ENCODE measurements at regions of chr6 and their contacts with region 1.

Region 1: DNA sequence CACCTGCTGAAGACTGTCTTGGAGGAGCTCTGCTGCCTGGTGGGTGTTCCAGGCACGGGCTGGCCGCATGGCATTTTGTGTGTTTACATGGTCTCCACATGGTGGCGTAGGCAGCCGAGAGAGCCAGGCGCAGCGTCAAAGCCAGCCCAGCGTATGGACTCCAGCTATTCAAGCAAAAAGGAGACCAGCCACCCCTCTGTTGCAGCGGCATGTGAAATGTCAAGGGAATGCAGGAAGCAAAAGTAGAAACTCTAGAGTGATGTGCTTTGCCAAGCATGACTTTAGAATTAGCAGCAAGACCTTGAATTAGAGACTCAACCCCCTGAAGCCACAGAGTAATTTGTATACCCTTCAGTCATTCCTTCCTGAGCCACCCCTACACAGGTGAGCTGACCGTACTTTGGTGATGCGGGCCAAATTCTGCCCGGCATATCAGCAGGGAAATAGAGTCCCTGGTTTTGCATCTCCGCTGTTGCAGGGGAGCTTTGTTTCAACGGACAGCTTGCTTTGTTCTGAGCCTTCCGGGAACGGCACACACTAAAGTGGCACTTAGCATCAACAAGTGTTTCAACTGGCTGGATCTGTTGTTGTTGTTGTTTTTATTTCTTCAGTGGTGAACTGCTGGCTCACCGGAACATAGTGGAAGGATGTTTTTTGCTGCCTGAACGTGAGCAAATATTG is 48.5 kb downstream of the FNDC1 start:
- DNase-seq: peak; percentile 39
- ATAC-seq: peak; percentile 98
- H3K4me3 ChIP-seq: no peak overlapping the region
- H3K27ac ChIP-seq: no peak overlapping the region
- H3K4me1 ChIP-seq: 0 out of 4 replicates have a peak, but pooled peaks cover 0 to 4% of the 10 kb centered on the region in 2 experiments
- H3K27me3 ChIP-seq: peaks cover 33% of the 10 kb centered on the region
- CTCF ChIP-seq: peak; percentile 63 to 75 (median 72)
- POLR2A ChIP-seq: no peak
- RAD21 ChIP-seq: peak; percentile 77

Region 2: GRCh38 chr6:159252955-159253508 is 35.3 kb after region 1 on chr6:
- CTCF ChIA-PET with region 1: interaction called, 14 read pairs
- POLR2A ChIA-PET with region 1: no interaction called
- RAD21 ChIA-PET with region 1: no interaction called
- intact Hi-C with region 1: no loop called
- DNase-seq: peak; percentile 33
- ATAC-seq: peak; percentile 94
- H3K4me3 ChIP-seq: no peak overlapping the region
- H3K27ac ChIP-seq: no peak overlapping the region
- H3K4me1 ChIP-seq: 0 out of 4 replicates have a peak, but pooled peaks cover 0 to 3% of the 10 kb centered on the region in 2 experiments
- H3K27me3 ChIP-seq: 0 out of 2 replicates have a peak, but pooled peaks cover 6% of the 10 kb centered on the region
- CTCF ChIP-seq: peak; percentile 36 to 69 (median 66); a peak in 5 of 6 replicates
- POLR2A ChIP-seq: no peak
- RAD21 ChIP-seq: peak; percentile 37; the same call in 1 of the 2 replicates

Region 3: GRCh38 chr6:159463119-159463829 is 245.5 kb after region 1 on chr6:
- CTCF ChIA-PET with region 1: interaction called, 12 read pairs
- POLR2A ChIA-PET with region 1: no interaction called
- RAD21 ChIA-PET with region 1: no interaction called
- intact Hi-C with region 1: loop called (anchors 2 kb)
- DNase-seq: peak; percentile 16
- ATAC-seq: peak; percentile 72
- H3K4me3 ChIP-seq: no peak overlapping the region
- H3K27ac ChIP-seq: no peak overlapping the region
- H3K4me1 ChIP-seq: no peaks in the 10 kb centered on the region
- H3K27me3 ChIP-seq: 0 out of 2 replicates have a peak, but pooled peaks cover 3% of the 10 kb centered on the region
- CTCF ChIP-seq: peak; percentile 43 to 52 (median 46); a peak in 4 of 6 replicates
- POLR2A ChIP-seq: no peak
- RAD21 ChIP-seq: peak; percentile 66

Region 4: GRCh38 chr6:159608961-159609651 is 391.4 kb after region 1 on chr6:
- CTCF ChIA-PET with region 1: interaction called, 20 read pairs
- POLR2A ChIA-PET with region 1: no interaction called
- RAD21 ChIA-PET with region 1: interaction called, 4 to 8 read pairs
- intact Hi-C with region 1: loop called (anchors 1 kb)
- DNase-seq: peak; percentile 58
- ATAC-seq: peak; percentile 97
- H3K4me3 ChIP-seq: no peak overlapping the region
- H3K27ac ChIP-seq: no peak overlapping the region
- H3K4me1 ChIP-seq: no peaks in the 10 kb centered on the region
- H3K27me3 ChIP-seq: no peaks in the 10 kb centered on the region
- CTCF ChIP-seq: peak; percentile 89 to 95 (median 94)
- POLR2A ChIP-seq: no peak
- RAD21 ChIP-seq: peak; percentile 96

Region 5: GRCh38 chr6:159654483-159655098 is 436.9 kb after region 1 on chr6:
- CTCF ChIA-PET with region 1: interaction called, 15 read pairs
- POLR2A ChIA-PET with region 1: no interaction called
- RAD21 ChIA-PET with region 1: interaction called in 1 of 2 experiments, 6 read pairs
- intact Hi-C with region 1: loop called (anchors 2 kb)
- DNase-seq: peak; percentile 41
- ATAC-seq: peak; percentile 66
- H3K4me3 ChIP-seq: no peak overlapping the region
- H3K27ac ChIP-seq: no peak overlapping the region
- H3K4me1 ChIP-seq: no peaks in the 10 kb centered on the region
- H3K27me3 ChIP-seq: no peaks in the 10 kb centered on the region
- CTCF ChIP-seq: peak; percentile 32 to 74 (median 74); a peak in 5 of 6 replicates
- POLR2A ChIP-seq: no peak
- RAD21 ChIP-seq: peak; percentile 87